Activated T-helper 2 cell treated with anti-CD3 and anti-CD28 coated beads, Interferon-gamma antibody, Interleukin-2, Interleukin-4, amounts not matched to agents 10 μg/mL and 5 μg/mL and 100 μg/mL, durations not matched to agents 14 hours and 24 hours and 36 hours (primary cell): ENCODE measurements at regions of chr13 and their contacts with region 1.

Region 1: GRCh38 chr13:108895220-108895704 is 265.9 kb downstream of the MYO16 start:
- DNase-seq: no peak
- H3K4me3 Mint-ChIP-seq: no peak overlapping the region
- H3K27ac Mint-ChIP-seq: no peak overlapping the region
- H3K4me1 Mint-ChIP-seq: peaks cover 11% of the 10 kb centered on the region
- H3K27me3 Mint-ChIP-seq: peaks cover 14% of the 10 kb centered on the region

Region 2: GRCh38 chr13:108227651-108228272 is 667.5 kb before region 1 on chr13:
- intact Hi-C with region 1: loop called (anchors 2 kb)
- DNase-seq: no peak
- H3K4me3 Mint-ChIP-seq: no peak overlapping the region
- H3K27ac Mint-ChIP-seq: no peak overlapping the region
- H3K4me1 Mint-ChIP-seq: peaks cover 24% of the 10 kb centered on the region
- H3K27me3 Mint-ChIP-seq: no peaks in the 10 kb centered on the region

Region 3: DNA sequence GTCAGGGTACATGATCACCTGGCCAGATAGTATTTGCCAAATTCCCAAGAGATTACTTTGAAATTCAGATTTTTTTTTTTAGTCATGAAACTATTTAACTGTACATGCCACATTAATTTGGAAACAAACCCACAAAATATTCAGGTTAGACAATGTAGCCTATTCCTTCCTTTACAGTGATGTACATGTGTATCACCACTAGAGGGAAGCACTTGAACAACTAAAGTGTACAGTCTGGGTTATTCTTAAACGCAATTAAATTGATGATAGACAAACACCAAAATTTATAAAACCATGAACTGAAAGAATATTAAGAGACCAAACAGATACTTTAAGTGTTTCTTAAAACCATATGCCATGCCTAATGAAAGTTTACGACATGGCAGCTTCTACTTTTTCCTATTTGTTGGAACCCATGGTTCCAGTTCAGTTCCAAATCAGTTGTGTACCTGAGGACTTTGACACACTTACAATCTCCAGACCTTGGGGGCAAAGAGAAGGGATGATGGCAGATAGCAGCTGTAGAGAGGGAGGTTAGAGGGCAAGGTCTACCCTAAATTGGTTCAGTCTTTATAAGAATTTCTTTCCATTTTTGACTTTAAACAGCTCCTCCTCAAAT is 572.9 kb before region 1 on chr13:
- intact Hi-C with region 1: loop called (anchors 1 kb)
- DNase-seq: no peak
- H3K4me3 Mint-ChIP-seq: no peak overlapping the region
- H3K27ac Mint-ChIP-seq: no peak overlapping the region
- H3K4me1 Mint-ChIP-seq: peaks cover 1% of the 10 kb centered on the region
- H3K27me3 Mint-ChIP-seq: peaks cover 14% of the 10 kb centered on the region

Region 4: DNA sequence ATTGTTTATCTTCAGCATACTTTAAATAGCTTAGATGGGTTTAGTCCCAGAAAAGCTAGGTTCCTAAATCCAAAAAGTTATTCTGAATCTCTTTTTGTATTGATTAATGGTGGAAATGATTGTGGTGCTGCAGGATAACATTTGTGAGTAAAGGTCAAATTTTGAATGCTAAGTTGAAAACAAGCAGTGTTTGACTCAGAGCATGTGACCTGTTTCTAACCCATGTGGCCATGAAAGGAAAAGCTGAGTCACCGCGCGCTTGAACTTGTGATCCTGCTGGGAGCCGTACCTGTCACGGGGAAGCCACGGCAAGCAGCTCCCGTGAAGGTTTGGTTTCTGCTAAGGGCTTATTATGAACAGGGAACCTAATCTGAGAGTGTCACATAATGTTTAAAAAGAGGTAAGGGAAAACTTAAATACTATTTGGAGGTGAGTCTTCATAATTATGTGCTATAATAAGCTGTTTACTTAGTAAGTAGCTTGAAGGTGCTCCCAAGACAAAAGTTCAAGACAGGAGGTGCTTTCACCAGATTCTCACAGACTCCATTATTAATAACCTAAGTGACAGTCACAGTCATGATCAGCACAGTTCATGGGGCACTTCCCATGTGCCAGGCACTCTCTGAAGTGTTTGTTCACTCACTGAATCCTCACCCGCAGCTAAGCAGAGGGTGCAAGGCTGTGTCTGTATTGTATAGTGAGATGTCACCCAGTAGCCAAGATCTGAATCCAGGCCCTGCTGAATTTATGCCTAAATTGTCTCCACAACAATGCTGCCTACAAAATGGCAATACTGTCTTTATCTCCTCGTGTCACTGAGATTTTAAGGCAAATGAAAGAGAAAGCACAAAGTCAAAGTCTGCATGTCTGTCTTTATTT is 20.6 kb after region 1 on chr13:
- intact Hi-C with region 1: loop called (anchors 1 kb)
- DNase-seq: peak; percentile 73
- H3K4me3 Mint-ChIP-seq: peak overlapping the region; percentile 60
- H3K27ac Mint-ChIP-seq: peak overlapping the region; percentile 89
- H3K4me1 Mint-ChIP-seq: peaks cover 21% of the 10 kb centered on the region
- H3K27me3 Mint-ChIP-seq: peaks cover 15% of the 10 kb centered on the region